Gastrocnemius medialis (tissue), 4 donors: ENCODE measurements at regions of chr3 and their contacts with region 1.

Region 1: DNA sequence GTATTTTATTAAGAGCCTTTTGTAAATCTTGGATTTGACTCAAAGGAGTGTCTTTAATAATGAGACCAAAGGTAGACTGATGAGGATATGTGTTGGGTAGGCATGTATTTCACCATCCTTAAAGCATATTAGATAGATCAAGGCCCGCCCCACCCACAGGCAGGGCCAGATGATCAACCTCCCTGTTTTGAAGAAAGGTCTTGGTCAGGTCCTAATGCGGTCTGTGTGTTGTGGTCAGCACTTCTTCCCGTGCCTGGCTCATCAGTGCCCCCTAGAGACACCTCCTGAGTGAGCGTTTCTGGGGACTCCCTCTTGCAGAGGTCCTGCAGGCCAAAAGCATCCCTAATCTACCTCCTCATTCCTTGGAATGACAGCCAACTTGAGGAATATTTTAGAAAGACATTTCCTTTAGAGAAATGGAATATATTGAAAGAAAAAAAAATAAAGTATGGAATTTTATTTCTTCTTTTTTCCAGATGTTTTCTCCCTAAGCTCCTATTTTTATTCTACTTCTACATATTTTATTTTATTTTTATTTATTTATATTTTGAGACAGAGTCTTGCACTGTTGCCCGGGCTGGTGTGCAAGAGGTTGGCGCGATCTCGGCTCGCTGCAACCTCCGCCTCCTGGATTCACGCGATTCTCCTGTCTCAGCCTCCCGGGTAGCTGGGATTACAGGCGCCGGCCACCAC is 6.0 kb downstream of the TM4SF4 start:
- DNase-seq: peak; percentile 54 to 74
- ATAC-seq: peak; percentile 90 to 96
- H3K4me3 ChIP-seq: no peak overlapping the region
- H3K27ac ChIP-seq: peak overlapping the region; percentile 34 to 75 (median 52)
- H3K4me1 ChIP-seq: peaks cover 9 to 16% of the 10 kb centered on the region in 2 donors
- H3K27me3 ChIP-seq: no peaks in the 10 kb centered on the region
- CTCF ChIP-seq: peak; percentile 55 to 84 (median 70)
- POLR2A ChIP-seq: no peak

Region 2: GRCh38 chr3:149352556-149352955 is 127.9 kb before region 1 on chr3:
- in situ Hi-C with region 1: loop called in 1 of 4 experiments (anchors 10 kb)
- intact Hi-C with region 1: loop called (anchors 1 kb)
- DNase-seq: peak in 1 of 2 donors; percentile 12
- ATAC-seq: peak; percentile 56 to 85
- H3K4me3 ChIP-seq: no peak overlapping the region
- H3K27ac ChIP-seq: peak overlapping the region in 1 of 4 donors; percentile 2
- H3K4me1 ChIP-seq: peaks cover 0 to 3% of the 10 kb centered on the region in 2 donors
- H3K27me3 ChIP-seq: no peaks in the 10 kb centered on the region
- CTCF ChIP-seq: peak; percentile 36 to 73 (median 59)
- POLR2A ChIP-seq: no peak

Region 3: GRCh38 chr3:149393345-149394160 is 86.9 kb before region 1 on chr3:
- in situ Hi-C with region 1: loop called (anchors 5 to 25 kb)
- intact Hi-C with region 1: loop called (anchors 1 kb)
- DNase-seq: peak in 1 of 2 donors; percentile 54
- ATAC-seq: peak; percentile 64 to 81
- H3K4me3 ChIP-seq: no peak overlapping the region
- H3K27ac ChIP-seq: peak overlapping the region in 1 of 4 donors; percentile 1
- H3K4me1 ChIP-seq: peaks cover 3 to 12% of the 10 kb centered on the region in 2 donors
- H3K27me3 ChIP-seq: no peaks in the 10 kb centered on the region
- CTCF ChIP-seq: peak; percentile 64 to 80 (median 76)
- POLR2A ChIP-seq: no peak

Region 4: DNA sequence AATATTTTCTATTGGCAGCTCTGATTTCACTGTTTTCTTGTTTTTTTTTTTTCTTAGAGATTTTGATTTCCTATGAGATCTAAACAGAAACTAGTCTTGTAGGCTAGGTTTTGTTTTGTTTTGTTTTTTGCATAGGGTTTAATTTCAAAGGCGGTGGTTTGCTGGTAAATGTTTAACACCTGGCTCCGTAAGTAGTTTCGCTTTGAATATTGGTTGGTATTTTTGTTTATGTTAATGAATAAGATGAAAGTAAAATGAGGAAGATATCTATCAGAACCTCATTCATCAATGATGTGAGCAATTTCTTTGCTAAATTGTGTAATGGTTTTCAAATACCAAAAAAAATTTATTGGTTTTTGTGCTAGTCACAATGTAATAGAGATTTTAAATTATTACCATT is 63.3 kb before region 1 on chr3:
- in situ Hi-C with region 1: no loop called
- intact Hi-C with region 1: no loop called
- DNase-seq: no peak
- ATAC-seq: no peak
- H3K4me3 ChIP-seq: no peak overlapping the region
- H3K27ac ChIP-seq: no peak overlapping the region
- H3K4me1 ChIP-seq: no peaks in the 10 kb centered on the region
- H3K27me3 ChIP-seq: no peaks in the 10 kb centered on the region
- CTCF ChIP-seq: no peak
- POLR2A ChIP-seq: no peak

Region 5: DNA sequence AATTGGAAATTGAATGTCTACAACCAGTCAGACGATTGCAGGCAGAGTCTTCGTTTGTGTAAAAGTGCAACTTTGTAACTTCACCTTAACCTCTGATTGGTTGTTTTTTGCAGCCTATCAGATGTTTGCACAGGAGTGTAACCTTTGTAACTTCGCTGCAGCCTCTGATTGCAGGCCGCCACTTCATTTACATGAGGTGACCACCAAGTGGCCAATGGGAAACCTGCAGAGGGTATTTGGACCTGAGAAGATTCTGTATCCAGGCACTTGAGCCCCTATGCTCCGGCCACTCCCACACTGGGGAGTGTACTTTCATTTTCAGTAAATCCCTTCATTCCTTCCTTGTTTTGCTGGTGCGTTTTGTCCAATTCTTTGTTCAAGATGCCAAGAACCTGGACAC is 558.4 kb after region 1 on chr3:
- in situ Hi-C with region 1: no loop called
- intact Hi-C with region 1: no loop called
- DNase-seq: no peak
- ATAC-seq: no peak
- H3K4me3 ChIP-seq: no peak overlapping the region
- H3K27ac ChIP-seq: peak overlapping the region in 3 of 4 donors; percentile 94 to 98 (median 94)
- H3K4me1 ChIP-seq: peaks cover 15 to 31% of the 10 kb centered on the region in 2 donors
- H3K27me3 ChIP-seq: no peaks in the 10 kb centered on the region
- CTCF ChIP-seq: no peak
- POLR2A ChIP-seq: peak in 1 of 2 donors; percentile 11